PC-9 (cell line): ENCODE measurements at regions of chr5 and their contacts with region 1.

Region 1: DNA sequence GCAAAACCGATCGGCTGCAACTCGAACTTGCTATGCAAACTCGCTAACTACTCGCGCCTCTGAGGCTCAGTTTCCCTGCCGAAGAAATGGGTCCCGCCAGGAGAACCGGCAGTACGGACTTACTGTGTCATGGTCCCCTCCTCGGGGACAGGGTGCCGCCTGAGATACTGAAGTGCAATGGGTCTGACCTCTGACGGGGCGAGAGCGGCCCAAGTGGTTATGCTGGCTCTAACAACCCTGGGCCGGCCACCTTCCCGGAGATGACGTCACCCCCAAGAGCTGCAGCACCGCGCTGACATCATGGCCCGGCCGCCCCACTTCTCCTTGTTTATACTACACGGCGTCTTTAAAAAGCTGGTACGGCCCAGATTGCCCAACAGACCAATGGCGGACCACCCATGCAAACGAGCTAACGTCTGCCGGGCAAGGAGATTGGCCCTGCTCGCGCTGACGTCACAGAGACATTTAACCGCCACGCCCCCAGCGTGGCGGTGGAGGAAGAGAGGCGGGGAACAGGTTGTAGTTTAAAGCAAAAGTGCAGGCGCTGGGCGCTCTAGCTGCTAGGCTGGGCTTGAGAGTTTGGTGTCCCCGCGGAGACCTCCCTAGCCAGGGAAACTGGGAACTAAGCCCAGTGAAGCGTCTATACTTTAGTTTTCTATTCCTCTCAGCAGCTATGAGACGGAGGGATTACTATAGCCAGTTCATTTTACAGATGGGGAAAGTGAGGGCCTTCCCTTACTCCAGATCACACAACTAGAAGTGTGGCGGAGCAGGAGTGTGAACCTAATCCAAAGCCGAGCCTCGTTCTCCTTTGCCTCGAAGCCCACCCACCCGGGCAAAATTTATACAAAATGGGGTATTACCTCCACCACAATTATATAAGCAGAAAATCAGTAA is 654 bp upstream of the RNF44 start:
- DNase-seq: peak; percentile 98 to 99
- H3K4me3 ChIP-seq: peak overlapping the region; percentile 99
- H3K27ac ChIP-seq: peak overlapping the region; percentile 79
- H3K4me1 ChIP-seq: peaks cover 33% of the 10 kb centered on the region
- H3K27me3 ChIP-seq: no peaks in the 10 kb centered on the region
- CTCF ChIP-seq: no peak

Region 2: GRCh38 chr5:176388444-176389134 is 149.3 kb before region 1 on chr5 and contains the starts of genes HIGD2A and NOP16:
- CTCF ChIA-PET with region 1: no interaction called
- POLR2A ChIA-PET with region 1: interaction called, 3 read pairs
- intact Hi-C with region 1: loop called (anchors 1 kb)
- DNase-seq: peak; percentile 95 to 98
- H3K4me3 ChIP-seq: peak within 1 kb of the TSS; percentile 74
- H3K27ac ChIP-seq: peak within 1 kb of the TSS; percentile 71
- H3K4me1 ChIP-seq: peaks cover 22% of the 10 kb centered on the region
- H3K27me3 ChIP-seq: no peaks in the 10 kb centered on the region
- CTCF ChIP-seq: no peak
- total RNA-seq, gene HIGD2A: 133 and 149 TPM in 2 replicates
- total RNA-seq, gene NOP16: 31.5 and 35.8 TPM in 2 replicates

Region 3: GRCh38 chr5:176415952-176416924 is 121.6 kb before region 1 on chr5 and contains the start of gene CLTB:
- CTCF ChIA-PET with region 1: interaction called, 6 read pairs
- POLR2A ChIA-PET with region 1: interaction called, 6 read pairs
- intact Hi-C with region 1: loop called (anchors 1 kb)
- DNase-seq: peak; percentile 85 to 87
- H3K4me3 ChIP-seq: peak within 1 kb of the TSS; percentile 98
- H3K27ac ChIP-seq: peak within 1 kb of the TSS; percentile 94
- H3K4me1 ChIP-seq: peaks cover 81% of the 10 kb centered on the region
- H3K27me3 ChIP-seq: no peaks in the 10 kb centered on the region
- CTCF ChIP-seq: peak; percentile 29; the same call in 1 of the 2 replicates
- total RNA-seq, gene CLTB: 123 and 126 TPM in 2 replicates

Region 4: DNA sequence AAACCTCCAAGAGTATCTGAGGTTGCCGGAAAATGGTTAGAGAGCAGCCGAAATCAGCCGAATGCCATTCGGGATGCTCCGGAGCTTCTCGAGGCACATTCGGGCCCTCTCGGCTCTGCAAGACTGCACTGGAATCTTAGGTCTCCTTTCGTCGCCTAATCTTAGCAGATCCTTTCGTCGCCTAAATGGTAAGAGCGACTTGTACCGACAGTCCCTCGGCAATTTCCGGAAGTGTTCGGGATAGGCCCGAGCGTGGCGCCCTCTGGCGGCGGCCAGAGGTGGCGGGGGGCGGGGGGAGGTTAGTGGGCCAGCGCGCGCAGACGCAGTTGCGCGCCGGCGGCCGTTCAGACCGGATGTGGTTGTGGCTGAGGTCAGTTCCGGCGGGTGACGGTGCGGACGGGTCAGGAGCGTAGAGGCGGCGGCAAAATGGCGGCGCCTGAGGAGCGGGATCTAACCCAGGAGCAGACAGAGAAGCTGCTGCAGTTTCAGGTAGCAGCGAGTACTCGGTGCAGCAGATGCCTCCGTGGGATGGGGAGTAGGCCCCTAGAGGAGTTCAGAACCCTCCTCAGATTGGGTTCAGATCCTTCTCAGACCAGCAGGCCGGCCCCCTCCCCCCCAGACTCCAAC is 89.8 kb before region 1 on chr5 and contains the start of gene FAF2:
- CTCF ChIA-PET with region 1: interaction called, 7 read pairs
- POLR2A ChIA-PET with region 1: interaction called, 9 read pairs
- intact Hi-C with region 1: loop called (anchors 1 kb)
- DNase-seq: peak; percentile 97 to 100
- H3K4me3 ChIP-seq: peak within 1 kb of the TSS; percentile 89
- H3K27ac ChIP-seq: peak within 1 kb of the TSS; percentile 89
- H3K4me1 ChIP-seq: peaks cover 34% of the 10 kb centered on the region
- H3K27me3 ChIP-seq: no peaks in the 10 kb centered on the region
- CTCF ChIP-seq: peak; percentile 97
- total RNA-seq, gene FAF2: 41.2 and 59.7 TPM in 2 replicates

Region 5: GRCh38 chr5:176463113-176463764 is 74.6 kb before region 1 on chr5:
- CTCF ChIA-PET with region 1: no interaction called
- POLR2A ChIA-PET with region 1: interaction called, 11 read pairs
- intact Hi-C with region 1: no loop called
- DNase-seq: no peak
- H3K4me3 ChIP-seq: no peak overlapping the region
- H3K27ac ChIP-seq: no peak overlapping the region
- H3K4me1 ChIP-seq: peaks cover 13% of the 10 kb centered on the region
- H3K27me3 ChIP-seq: no peaks in the 10 kb centered on the region
- CTCF ChIP-seq: no peak

Region 6: GRCh38 chr5:176774216-176775170 is 236.6 kb after region 1 on chr5:
- CTCF ChIA-PET with region 1: no interaction called
- POLR2A ChIA-PET with region 1: no interaction called
- intact Hi-C with region 1: no loop called
- DNase-seq: no peak
- H3K4me3 ChIP-seq: no peak overlapping the region
- H3K27ac ChIP-seq: no peak overlapping the region
- H3K4me1 ChIP-seq: no peaks in the 10 kb centered on the region
- H3K27me3 ChIP-seq: 0 out of 2 replicates have a peak, but pooled peaks cover 3% of the 10 kb centered on the region
- CTCF ChIP-seq: no peak

Region 7: DNA sequence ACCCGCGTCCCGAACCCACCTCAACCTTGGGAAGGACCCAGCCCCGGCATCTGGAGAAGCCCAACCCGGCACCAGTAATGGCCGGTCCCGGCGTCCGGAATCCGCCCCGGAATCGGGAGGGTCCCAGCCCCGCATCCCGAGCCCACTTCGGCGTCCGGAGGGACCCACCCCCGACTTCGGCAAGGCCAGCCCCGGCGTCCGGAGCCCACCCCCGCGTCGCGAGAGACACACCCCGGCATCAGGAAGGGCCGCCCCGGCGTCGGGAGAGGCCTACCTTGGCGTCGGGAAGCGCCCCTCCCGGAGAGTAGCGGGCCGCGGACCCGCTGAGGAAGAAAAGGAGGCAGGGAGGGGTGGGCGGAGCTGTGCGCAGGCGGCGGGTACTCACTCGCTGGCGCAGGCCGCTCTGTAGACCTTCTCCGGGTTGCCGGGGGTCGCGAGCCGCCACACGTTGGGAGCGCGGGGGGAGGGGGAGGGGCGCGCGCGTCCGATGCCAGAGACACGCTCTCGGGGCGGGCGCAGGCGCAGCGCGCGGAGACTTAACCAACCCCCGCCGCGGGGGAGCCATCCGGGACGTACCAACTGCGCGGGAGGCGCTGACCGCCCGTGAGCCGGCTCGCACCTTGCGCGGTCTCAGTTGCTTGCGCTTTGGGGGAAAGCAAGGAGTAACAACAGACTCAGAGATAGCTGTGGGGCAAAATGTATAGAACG is 468.6 kb after region 1 on chr5 and contains the start of gene UIMC1:
- CTCF ChIA-PET with region 1: no interaction called
- POLR2A ChIA-PET with region 1: no interaction called
- intact Hi-C with region 1: loop called (anchors 10 kb)
- DNase-seq: peak; percentile 80 to 96
- H3K4me3 ChIP-seq: peak within 1 kb of the TSS; percentile 81
- H3K27ac ChIP-seq: peak within 1 kb of the TSS; percentile 53
- H3K4me1 ChIP-seq: peaks cover 11% of the 10 kb centered on the region; the same call in 1 of the 2 replicates
- H3K27me3 ChIP-seq: no peaks in the 10 kb centered on the region
- CTCF ChIP-seq: no peak
- total RNA-seq, gene UIMC1: 48.3 and 59.5 TPM in 2 replicates